ENCODE measurements at regions of chr7 and their contacts with region 1.

Region 1: DNA sequence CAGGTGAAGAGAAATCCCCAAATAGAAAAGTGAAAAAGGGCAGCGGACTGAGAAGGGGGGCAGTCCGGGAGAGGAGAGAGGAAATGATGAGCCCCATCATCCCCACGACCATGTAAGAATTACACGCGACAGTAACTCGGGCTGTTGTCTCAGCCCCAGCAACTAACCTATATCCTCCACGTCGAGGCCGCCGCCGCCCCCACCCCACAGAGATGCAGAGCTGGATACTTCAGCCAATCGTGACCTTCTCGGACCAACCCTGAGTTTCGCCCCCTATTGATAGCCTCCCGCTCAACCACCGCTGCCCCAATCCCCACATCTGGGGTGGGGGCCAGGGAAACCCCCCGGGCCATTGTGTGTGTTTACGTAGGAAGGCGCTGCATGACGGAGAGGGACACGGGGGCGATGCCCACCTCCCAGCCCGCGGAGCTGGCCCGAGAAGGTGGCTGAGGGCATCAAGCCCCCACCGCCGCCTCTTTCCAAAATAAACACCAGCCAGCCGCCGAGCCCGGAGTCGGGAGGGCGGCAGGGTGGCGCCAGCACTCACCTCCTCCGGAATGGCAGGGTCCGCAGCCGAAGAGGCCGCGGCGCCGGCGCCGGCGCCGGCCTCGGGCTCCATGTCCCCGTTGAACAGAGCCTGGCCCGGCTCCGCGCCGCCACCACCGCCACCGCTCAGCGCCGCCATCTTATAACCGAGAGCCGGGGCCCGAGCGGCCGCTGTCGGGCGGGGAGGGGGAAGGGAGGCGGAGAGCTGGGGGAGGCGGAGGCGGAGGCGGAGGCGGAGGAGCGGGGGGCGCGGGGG is 509 bp downstream of the BRAF start:
- DNase-seq: peak; percentile 79
- ATAC-seq: peak; percentile 71
- H3K4me3 Mint-ChIP-seq: no peak overlapping the region
- H3K27ac Mint-ChIP-seq: no peak overlapping the region
- H3K4me1 Mint-ChIP-seq: peaks cover 9% of the 10 kb centered on the region
- H3K27me3 Mint-ChIP-seq: no peaks in the 10 kb centered on the region

Region 2: DNA sequence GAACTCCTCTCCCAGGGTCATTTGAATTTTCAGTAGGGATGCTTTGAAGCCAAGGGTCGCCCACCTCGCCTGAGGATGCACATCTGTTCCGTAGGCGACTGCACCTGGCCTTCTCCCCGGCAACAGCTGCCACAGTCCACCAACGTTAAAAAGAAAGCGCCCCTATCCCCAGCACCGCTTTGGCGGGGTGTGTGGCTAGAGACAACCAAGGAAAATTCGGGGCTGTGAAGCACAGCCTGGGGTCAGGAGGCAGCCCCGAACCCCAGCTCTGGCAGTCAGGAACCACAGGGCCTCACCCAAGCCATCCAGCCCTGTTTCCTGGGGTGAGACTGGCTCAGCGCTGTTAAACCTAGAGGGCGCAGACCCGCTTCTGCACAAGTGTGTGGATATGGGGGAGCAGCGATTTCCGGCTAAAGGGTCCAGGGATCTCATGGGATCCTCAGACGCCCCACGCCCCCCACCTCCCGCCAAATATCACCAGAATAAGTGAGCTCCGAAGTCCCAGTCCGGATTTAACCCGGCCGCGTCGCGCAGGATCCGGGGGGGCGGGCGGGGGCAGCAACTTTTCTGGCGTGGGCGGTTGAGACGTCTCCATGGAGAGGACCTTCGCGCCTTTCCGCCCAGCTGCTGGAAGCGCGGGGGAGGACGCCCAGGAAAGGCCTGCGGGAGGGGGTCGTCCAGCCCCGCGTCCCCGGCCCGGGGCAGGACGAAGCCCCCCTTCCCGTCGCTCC is 1889.2 kb before region 1 on chr7:
- CTCF ChIA-PET with region 1: no interaction called
- POLR2A ChIA-PET with region 1: no interaction called
- intact Hi-C with region 1: no loop called
- DNase-seq: peak; percentile 62
- ATAC-seq: peak; percentile 22
- H3K4me3 Mint-ChIP-seq: peak overlapping the region; percentile 82
- H3K27ac Mint-ChIP-seq: peak overlapping the region; percentile 84
- H3K4me1 Mint-ChIP-seq: peaks cover 22% of the 10 kb centered on the region
- H3K27me3 Mint-ChIP-seq: no peaks in the 10 kb centered on the region

Region 3: DNA sequence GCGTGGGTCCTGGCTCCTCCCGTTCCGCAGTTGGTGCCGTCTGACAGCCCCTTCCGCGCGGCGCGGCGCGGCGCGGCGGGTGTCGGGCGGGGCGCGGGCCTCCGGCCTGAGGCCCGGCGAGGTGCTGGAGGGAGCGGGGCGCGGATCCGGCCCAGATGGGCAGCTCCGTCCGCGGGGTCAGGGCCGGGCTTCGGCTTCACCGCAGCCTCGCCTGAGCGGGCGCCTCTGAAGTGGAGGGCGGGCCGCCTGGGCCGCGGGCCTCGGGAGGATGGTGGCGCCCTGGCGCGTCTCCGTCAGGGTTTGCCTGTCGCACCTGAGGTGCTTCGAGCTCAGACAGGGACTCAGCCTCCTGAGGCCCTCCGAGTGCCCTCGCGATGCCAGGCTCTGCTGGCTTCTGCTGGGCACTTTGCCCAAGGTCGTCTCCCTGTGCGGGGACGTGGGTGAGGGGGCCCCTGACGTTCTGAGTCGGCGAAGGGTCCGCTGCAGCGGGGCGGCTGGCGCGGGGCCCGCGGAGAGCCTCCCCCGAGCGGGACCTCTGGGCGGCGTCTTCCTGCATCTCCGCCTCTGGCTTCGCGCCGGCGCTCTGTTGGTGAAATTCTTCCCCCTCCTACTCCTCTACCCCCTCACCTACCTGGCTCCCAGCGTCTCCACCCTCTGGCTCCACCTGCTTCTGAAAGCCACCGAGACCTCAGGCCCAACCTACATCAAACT is 251.0 kb before region 1 on chr7:
- CTCF ChIA-PET with region 1: no interaction called
- POLR2A ChIA-PET with region 1: no interaction called
- intact Hi-C with region 1: loop called in 1 of 2 experiments (anchors 1 kb)
- DNase-seq: peak; percentile 72
- ATAC-seq: peak; percentile 74
- H3K4me3 Mint-ChIP-seq: peak overlapping the region; percentile 85
- H3K27ac Mint-ChIP-seq: peak overlapping the region; percentile 87
- H3K4me1 Mint-ChIP-seq: peaks cover 35% of the 10 kb centered on the region
- H3K27me3 Mint-ChIP-seq: no peaks in the 10 kb centered on the region

Region 4: GRCh38 chr7:140810830-140811556 is 113.2 kb before region 1 on chr7:
- CTCF ChIA-PET with region 1: interaction called, 7 read pairs
- POLR2A ChIA-PET with region 1: no interaction called
- intact Hi-C with region 1: loop called (anchors 1 to 2 kb)
- DNase-seq: peak; percentile 68
- ATAC-seq: peak; percentile 77
- H3K4me3 Mint-ChIP-seq: no peak overlapping the region
- H3K27ac Mint-ChIP-seq: no peak overlapping the region
- H3K4me1 Mint-ChIP-seq: peaks cover 8% of the 10 kb centered on the region
- H3K27me3 Mint-ChIP-seq: no peaks in the 10 kb centered on the region

Region 5: DNA sequence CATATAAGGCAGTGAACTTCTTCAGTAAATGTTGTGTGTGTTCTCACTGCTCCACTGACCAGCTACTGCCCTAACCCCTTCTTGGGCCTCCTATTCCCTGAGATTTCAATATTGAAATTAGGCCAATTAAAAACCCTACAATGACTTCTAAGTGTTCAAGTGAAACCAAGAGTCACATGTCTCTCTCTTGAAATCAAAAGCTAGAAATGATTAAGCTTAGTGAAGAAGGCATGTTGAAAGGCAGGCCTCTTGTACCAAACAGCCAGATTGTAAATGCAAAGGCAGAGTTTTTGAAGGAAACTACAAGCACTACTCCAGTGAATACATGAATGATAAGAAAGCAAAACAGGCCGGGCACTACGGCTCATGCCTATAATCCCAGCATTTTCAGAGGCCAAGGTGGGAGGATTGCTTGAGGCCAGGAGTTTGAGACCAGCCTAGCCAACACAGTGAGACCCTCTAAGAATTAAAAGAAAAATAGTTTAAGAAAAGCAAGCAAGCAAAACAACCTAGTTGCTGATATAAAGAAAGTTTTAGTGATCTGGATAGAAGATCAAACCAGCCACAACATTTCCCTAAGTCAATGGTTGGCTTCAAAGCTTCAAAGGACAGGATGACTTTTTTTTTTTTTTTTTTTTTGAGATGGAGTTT is 21.8 kb before region 1 on chr7:
- CTCF ChIA-PET with region 1: interaction called, 4 read pairs
- POLR2A ChIA-PET with region 1: interaction called, 7 read pairs
- intact Hi-C with region 1: loop called (anchors 1 kb)
- DNase-seq: no peak
- ATAC-seq: peak; percentile 83
- H3K4me3 Mint-ChIP-seq: peak overlapping the region; percentile 42
- H3K27ac Mint-ChIP-seq: peak overlapping the region; percentile 95
- H3K4me1 Mint-ChIP-seq: peaks cover 68% of the 10 kb centered on the region
- H3K27me3 Mint-ChIP-seq: no peaks in the 10 kb centered on the region

Region 6: DNA sequence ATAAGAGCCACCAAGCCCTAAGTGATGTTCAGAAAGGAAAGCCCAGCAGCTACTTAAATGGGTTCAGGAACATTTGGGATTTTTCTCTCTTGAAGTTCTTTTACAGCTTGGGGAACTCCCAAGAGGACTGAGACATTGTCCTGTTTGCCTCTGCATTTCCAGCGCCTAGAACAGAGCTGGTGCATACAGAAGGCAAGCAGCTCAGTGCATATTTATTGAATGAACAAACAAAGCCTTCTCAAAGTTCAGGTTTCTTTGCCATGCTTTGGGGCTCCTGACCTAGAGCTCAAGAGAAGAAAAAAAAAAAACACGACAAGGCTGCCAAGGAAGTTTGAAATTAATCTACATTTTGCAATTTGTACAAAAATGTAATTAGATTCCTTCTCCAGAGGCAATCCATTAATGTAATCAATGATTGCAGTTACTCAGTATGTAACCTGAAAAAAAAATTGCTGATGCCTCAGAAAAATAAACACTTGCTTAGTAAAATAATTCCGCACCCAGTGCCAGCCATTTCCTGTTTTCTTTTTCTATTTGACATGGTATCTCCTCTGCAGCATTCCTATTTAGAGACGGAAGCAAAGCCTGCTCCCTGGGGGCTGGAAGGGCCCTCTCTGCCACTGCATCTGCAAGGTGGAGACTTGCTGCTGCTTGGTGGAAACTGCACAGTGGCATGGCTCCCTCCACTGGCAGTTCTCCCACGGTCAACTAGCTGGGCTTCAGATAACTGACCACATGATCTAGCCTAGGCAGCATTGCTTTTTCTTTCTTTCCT is 307.0 kb after region 1 on chr7:
- CTCF ChIA-PET with region 1: no interaction called
- POLR2A ChIA-PET with region 1: no interaction called
- intact Hi-C with region 1: no loop called
- DNase-seq: no peak
- ATAC-seq: no peak
- H3K4me3 Mint-ChIP-seq: no peak overlapping the region
- H3K27ac Mint-ChIP-seq: no peak overlapping the region
- H3K4me1 Mint-ChIP-seq: no peaks in the 10 kb centered on the region
- H3K27me3 Mint-ChIP-seq: peaks cover 22% of the 10 kb centered on the region

Region 7: GRCh38 chr7:141737834-141738591 is 813.8 kb after region 1 on chr7 and contains the start of gene SSBP1:
- CTCF ChIA-PET with region 1: no interaction called
- POLR2A ChIA-PET with region 1: no interaction called
- intact Hi-C with region 1: loop called in 1 of 2 experiments (anchors 2 kb)
- DNase-seq: peak; percentile 95
- ATAC-seq: peak; percentile 89
- H3K4me3 Mint-ChIP-seq: peak within 1 kb of the TSS; percentile 96
- H3K27ac Mint-ChIP-seq: peak within 1 kb of the TSS; percentile 97
- H3K4me1 Mint-ChIP-seq: peaks cover 40% of the 10 kb centered on the region
- H3K27me3 Mint-ChIP-seq: no peaks in the 10 kb centered on the region
- total RNA-seq, gene SSBP1: 183 to 245 TPM